Colonic mucosa (tissue), 4 donors: ENCODE measurements at regions of chr4 and their contacts with region 1.

Region 1: GRCh38 chr4:74675673-74676279 is 118.5 kb downstream of the BTC start:
- DNase-seq: peak; percentile 58
- H3K4me3 ChIP-seq: no peak overlapping the region
- H3K27ac ChIP-seq: no peak overlapping the region
- H3K4me1 ChIP-seq: no peaks in the 10 kb centered on the region
- H3K27me3 ChIP-seq: no peaks in the 10 kb centered on the region
- CTCF ChIP-seq: peak; percentile 63

Region 2: DNA sequence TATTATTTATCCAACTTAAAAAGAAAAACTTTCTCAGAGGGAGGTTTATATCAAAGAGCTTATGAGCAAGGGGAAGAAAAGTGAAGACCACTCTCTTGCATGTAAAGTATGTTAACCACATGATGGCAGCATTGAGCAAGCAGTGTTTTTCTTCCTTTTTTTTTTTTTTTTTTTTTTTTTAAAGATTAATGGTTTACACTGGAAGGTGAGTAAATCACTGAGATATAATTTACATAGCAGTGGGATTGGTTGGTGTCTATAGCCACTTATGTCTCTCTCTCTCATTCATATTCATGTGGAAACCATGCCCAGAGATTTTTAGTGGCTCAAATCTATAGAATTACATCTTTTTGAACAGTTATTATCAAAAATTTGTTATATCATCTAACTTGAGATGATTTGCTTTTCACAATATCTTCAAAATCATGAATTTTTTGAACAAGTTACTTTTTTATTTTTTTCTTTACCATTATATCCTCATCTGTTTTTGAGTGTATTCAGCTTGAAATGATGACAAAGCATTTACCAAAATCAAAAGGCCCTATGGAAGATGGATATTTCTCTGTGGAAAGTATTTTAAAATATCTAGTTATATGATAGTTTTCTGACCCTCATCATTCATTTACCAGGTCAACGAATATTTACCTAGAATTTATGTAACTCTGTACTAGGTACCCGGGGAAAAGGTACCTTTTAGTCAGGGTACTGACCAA is 486.3 kb before region 1 on chr4:
- intact Hi-C with region 1: loop called (anchors 10 kb)
- DNase-seq: no peak
- H3K4me3 ChIP-seq: no peak overlapping the region
- H3K27ac ChIP-seq: no peak overlapping the region
- H3K4me1 ChIP-seq: no peaks in the 10 kb centered on the region
- H3K27me3 ChIP-seq: no peaks in the 10 kb centered on the region
- CTCF ChIP-seq: peak; percentile 68

Region 3: GRCh38 chr4:74217365-74217764 is 458.4 kb before region 1 on chr4:
- intact Hi-C with region 1: no loop called
- DNase-seq: no peak
- H3K4me3 ChIP-seq: no peak overlapping the region
- H3K27ac ChIP-seq: no peak overlapping the region
- H3K4me1 ChIP-seq: peaks cover 3% of the 10 kb centered on the region
- H3K27me3 ChIP-seq: no peaks in the 10 kb centered on the region
- CTCF ChIP-seq: no peak

Region 4: DNA sequence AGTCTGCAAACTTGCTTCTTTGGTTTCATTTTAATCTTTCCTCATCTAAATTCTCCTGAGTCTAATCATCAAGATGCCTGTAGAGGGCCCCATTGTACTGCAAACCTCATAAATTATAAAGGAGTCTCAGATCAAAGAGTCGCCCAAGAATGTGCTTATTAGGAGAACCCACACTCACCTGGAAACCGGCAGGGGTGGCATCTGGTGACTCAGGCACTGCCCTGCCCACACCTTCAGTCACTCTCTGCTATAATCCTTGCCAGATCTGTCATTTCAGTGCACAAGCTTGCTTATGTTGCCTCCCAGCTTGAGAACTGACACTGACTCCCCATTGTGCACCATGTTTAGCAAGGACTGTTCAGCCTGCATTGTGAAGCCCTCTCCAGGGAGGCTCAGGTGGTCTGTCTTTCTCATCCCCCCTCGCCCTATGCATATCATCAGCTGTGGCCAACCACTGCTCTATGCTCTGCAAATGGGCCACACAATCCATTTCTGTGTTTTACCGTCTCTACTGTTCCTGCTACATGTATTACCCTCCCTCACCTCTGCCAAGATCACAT is 355.1 kb before region 1 on chr4:
- intact Hi-C with region 1: loop called (anchors 5 kb)
- DNase-seq: peak; percentile 50
- H3K4me3 ChIP-seq: no peak overlapping the region
- H3K27ac ChIP-seq: no peak overlapping the region
- H3K4me1 ChIP-seq: peaks cover 3% of the 10 kb centered on the region
- H3K27me3 ChIP-seq: no peaks in the 10 kb centered on the region
- CTCF ChIP-seq: peak; percentile 50

Region 5: DNA sequence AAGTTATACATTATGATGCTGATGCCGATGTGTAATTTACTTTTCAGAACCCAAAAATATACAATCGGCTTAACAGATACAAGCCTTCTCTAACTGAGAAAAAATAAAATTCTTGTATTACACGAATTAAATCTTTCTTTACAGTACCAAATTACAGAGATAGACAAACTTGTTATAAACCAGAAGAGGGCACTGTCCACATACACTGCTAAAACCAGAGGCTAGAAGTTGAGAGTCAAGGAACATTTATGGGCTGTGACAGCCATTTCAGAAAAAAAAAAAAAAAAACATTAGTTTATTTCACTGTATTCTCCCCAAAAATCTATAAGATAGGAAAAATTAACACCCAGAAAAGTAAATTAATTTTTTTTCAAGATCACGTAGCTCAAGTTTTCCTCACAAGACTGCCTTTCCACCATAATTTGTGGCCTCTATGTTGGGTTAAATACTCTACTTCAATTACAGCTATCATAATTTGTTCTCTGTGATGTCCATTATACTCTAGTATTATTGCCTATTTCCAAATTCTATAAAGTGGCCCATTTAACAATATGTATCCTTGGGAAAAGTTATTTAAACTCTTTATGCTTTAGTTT is 298.8 kb before region 1 on chr4:
- intact Hi-C with region 1: loop called (anchors 2 kb)
- DNase-seq: no peak
- H3K4me3 ChIP-seq: no peak overlapping the region
- H3K27ac ChIP-seq: peak overlapping the region; percentile 81
- H3K4me1 ChIP-seq: no peaks in the 10 kb centered on the region
- H3K27me3 ChIP-seq: no peaks in the 10 kb centered on the region
- CTCF ChIP-seq: peak; percentile 44

Region 6: DNA sequence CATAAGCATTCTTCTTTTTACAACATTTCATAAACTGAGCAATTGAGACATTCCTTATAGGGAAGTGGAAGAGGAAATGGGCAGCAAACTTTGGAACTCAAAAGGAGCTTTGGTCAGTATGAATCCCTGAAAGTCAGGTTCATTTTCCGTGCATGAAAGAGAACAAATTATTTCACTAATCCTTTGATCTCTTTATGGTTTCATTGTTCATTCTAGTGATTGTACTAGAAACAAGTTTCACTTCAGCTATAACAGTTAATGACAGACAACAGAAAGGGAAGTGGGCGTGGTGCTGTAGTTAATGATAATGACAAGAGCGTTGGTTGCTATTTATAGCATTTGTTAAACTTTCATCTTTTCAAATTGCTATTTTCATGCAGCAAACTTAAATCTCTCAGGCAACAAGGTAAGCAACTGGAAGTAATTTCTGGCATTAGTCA is 132.5 kb before region 1 on chr4:
- intact Hi-C with region 1: loop called (anchors 10 kb)
- DNase-seq: peak; percentile 35
- H3K4me3 ChIP-seq: no peak overlapping the region
- H3K27ac ChIP-seq: peak overlapping the region; percentile 67
- H3K4me1 ChIP-seq: no peaks in the 10 kb centered on the region
- H3K27me3 ChIP-seq: no peaks in the 10 kb centered on the region
- CTCF ChIP-seq: no peak

Region 7: DNA sequence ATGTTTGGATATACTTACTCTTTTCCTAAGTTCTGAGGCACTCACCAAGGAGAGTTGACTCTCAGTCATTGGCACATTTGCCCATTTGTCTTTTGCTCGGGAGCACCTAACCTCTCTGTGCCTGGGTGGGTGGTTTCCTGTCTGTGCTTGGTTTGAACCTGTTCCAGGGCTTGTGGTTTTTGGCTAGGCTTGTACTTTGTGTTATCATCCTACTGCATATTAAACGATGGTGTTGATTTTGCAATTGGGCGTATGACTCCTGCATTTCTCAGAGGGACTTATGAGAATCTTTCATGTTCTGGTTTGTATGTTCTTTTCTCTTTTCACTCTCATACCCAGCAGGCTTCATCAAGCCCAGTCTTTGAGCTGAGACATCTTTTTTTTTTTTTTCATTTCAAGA is 43.1 kb before region 1 on chr4:
- intact Hi-C with region 1: no loop called
- DNase-seq: peak; percentile 81
- H3K4me3 ChIP-seq: no peak overlapping the region
- H3K27ac ChIP-seq: no peak overlapping the region
- H3K4me1 ChIP-seq: no peaks in the 10 kb centered on the region
- H3K27me3 ChIP-seq: no peaks in the 10 kb centered on the region
- CTCF ChIP-seq: no peak